ENCODE measurements at regions of chr12 and their contacts with region 1.

Region 1: GRCh38 chr12:121955258-121956235 is 37.2 kb downstream of the CFAP251 start:
- DNase-seq: peak; percentile 48
- ATAC-seq: peak; percentile 56
- H3K4me3 ChIP-seq: no peak overlapping the region
- H3K4me3 Mint-ChIP-seq: peak overlapping the region; percentile 8
- H3K27ac ChIP-seq: no peak overlapping the region
- H3K27ac Mint-ChIP-seq: peak overlapping the region; percentile 29
- H3K4me1 ChIP-seq: peaks cover 10 to 11% of the 10 kb centered on the region in 2 donors
- H3K4me1 Mint-ChIP-seq: peaks cover 16% of the 10 kb centered on the region
- H3K27me3 ChIP-seq: no peaks in the 10 kb centered on the region
- H3K27me3 Mint-ChIP-seq: no peaks in the 10 kb centered on the region
- CTCF ChIP-seq: peak; percentile 38

Region 2: GRCh38 chr12:122031342-122032216 is 76.0 kb after region 1 on chr12:
- CTCF ChIA-PET with region 1: interaction called, 4 read pairs
- POLR2A ChIA-PET with region 1: no interaction called
- intact Hi-C with region 1: loop called (anchors 5 kb)
- DNase-seq: peak; percentile 70
- ATAC-seq: peak; percentile 39
- H3K4me3 ChIP-seq: no peak overlapping the region
- H3K4me3 Mint-ChIP-seq: peak overlapping the region; percentile 29
- H3K27ac ChIP-seq: peak overlapping the region; percentile 18 to 70
- H3K27ac Mint-ChIP-seq: peak overlapping the region; percentile 71
- H3K4me1 ChIP-seq: peaks cover 51 to 67% of the 10 kb centered on the region in 2 donors
- H3K4me1 Mint-ChIP-seq: peaks cover 61% of the 10 kb centered on the region
- H3K27me3 ChIP-seq: no peaks in the 10 kb centered on the region
- H3K27me3 Mint-ChIP-seq: no peaks in the 10 kb centered on the region
- CTCF ChIP-seq: peak; percentile 81